PC-3 (cell line): ENCODE measurements at regions of chrX and their contacts with region 1.

Region 1: DNA sequence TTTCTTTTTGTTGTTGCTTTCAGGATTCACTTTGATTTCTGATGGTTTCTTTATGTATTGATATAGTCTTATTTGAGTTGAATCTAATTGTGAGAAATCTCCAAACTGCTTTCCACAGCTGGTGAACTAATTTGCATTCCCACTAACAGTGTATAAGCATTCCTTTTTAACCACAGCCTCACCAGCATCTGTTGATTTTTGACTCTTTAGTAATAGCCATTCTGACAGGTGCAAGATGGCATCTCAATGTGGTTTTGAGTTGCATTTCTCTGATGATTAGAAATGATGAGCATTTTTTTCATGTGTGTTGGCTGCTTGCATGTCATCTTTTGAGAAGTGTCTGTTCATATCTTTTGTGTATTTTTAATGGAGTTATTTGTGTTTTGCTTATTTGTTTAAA is 1023.1 kb downstream of the SH3BGRL start:
- DNase-seq: no peak
- ATAC-seq: no peak
- H3K4me3 ChIP-seq: no peak overlapping the region
- H3K27ac ChIP-seq: no peak overlapping the region
- H3K4me1 ChIP-seq: no peaks in the 10 kb centered on the region
- H3K27me3 ChIP-seq: no peaks in the 10 kb centered on the region
- CTCF ChIP-seq: no peak

Region 2: DNA sequence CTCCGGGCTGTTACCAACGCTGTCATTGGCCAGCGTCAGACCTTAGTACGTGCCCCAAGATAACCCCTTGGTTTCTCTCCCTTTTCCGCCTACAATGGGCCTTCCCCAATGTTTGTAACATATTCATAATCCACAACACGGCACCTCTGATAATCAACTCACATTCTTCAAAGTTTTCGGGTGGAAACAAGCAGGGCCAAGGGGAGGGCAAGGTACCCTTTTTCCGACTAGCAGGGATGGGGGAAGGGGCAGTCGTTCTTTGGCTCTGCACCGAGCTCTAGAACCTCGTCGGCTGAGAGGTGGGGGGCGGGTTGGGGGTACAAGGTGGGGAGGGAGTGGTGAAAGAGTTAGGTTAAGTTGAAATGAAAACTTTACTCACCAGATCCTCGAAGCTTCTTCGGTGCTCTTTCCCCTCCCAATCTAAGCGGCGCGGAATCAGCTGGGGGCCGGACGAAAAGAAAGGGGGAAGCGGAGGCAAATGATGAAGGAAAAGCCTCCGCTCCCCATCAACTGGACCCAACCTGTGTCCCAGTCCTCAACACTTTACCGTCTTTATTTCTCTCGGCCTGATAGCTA is 1416.7 kb before region 1 on chrX:
- CTCF ChIA-PET with region 1: no interaction called
- POLR2A ChIA-PET with region 1: no interaction called
- intact Hi-C with region 1: no loop called
- DNase-seq: peak; percentile 80
- ATAC-seq: peak; percentile 51
- H3K4me3 ChIP-seq: peak overlapping the region; percentile 97
- H3K27ac ChIP-seq: no peak overlapping the region
- H3K4me1 ChIP-seq: peaks cover 13% of the 10 kb centered on the region
- H3K27me3 ChIP-seq: no peaks in the 10 kb centered on the region
- CTCF ChIP-seq: no peak

Region 3: DNA sequence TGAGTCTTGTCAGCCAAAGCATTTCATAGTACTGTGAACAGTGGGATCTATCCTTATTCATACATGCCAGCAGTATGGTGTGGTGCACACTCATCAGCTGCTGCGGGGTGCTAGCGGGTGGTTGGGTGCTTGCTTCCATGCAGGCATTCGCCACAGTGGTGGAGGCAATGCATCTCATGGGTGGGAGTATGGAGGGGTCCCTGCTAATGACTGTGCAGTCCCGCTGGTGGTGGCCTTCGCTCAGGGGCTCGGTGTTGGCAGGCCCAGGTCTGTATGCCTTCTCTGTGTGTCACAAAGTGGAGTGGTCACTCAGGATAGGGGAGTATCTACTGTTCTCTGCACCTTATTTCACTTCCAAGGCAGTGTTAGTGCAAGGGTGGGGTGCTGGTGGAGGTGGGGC is 1405.7 kb after region 1 on chrX:
- CTCF ChIA-PET with region 1: no interaction called
- POLR2A ChIA-PET with region 1: no interaction called
- intact Hi-C with region 1: loop called (anchors 10 kb)
- DNase-seq: no peak
- ATAC-seq: no peak
- H3K4me3 ChIP-seq: no peak overlapping the region
- H3K27ac ChIP-seq: no peak overlapping the region
- H3K4me1 ChIP-seq: no peaks in the 10 kb centered on the region
- H3K27me3 ChIP-seq: no peaks in the 10 kb centered on the region
- CTCF ChIP-seq: no peak